ENCODE measurements at regions of chr13 and their contacts with region 1.

Region 1: GRCh38 chr13:49495783-49496762 is at the start of gene PHF11:
- DNase-seq: peak; percentile 66 to 92 (median 83)
- ATAC-seq: peak; percentile 84 to 89 (median 87)
- H3K4me3 ChIP-seq: peak within 1 kb of the TSS; percentile 79 to 95
- H3K4me3 Mint-ChIP-seq: peak within 1 kb of the TSS; percentile 95 to 98 (median 98)
- H3K27ac ChIP-seq: peak within 1 kb of the TSS; percentile 95
- H3K27ac Mint-ChIP-seq: peak within 1 kb of the TSS; percentile 100
- H3K4me1 ChIP-seq: peaks cover 6 to 38% of the 10 kb centered on the region in 2 experiments
- H3K4me1 Mint-ChIP-seq: peaks cover 53 to 57% (median 56%) of the 10 kb centered on the region in 3 donors
- H3K27me3 ChIP-seq: no peaks in the 10 kb centered on the region
- H3K27me3 Mint-ChIP-seq: no peaks in the 10 kb centered on the region
- total RNA-seq, gene PHF11: 94.0 to 119 (median 113) TPM

Region 2: GRCh38 chr13:49450105-49450819 is 45.8 kb before region 1 on chr13:
- CTCF ChIA-PET with region 1: interaction called in 1 of 2 experiments, 9 read pairs
- POLR2A ChIA-PET with region 1: interaction called, 3 to 14 read pairs
- DNase-seq: no peak
- ATAC-seq: no peak
- H3K4me3 ChIP-seq: no peak overlapping the region
- H3K4me3 Mint-ChIP-seq: peak overlapping the region in 1 of 3 donors; percentile 14
- H3K27ac ChIP-seq: no peak overlapping the region
- H3K27ac Mint-ChIP-seq: peak overlapping the region; percentile 69 to 93
- H3K4me1 ChIP-seq: peaks cover 13% of the 10 kb centered on the region in 2 experiments
- H3K4me1 Mint-ChIP-seq: peaks cover 73 to 77% (median 75%) of the 10 kb centered on the region in 3 donors
- H3K27me3 ChIP-seq: no peaks in the 10 kb centered on the region
- H3K27me3 Mint-ChIP-seq: no peaks in the 10 kb centered on the region